Posterior vena cava (tissue), 2 donors: ENCODE measurements at regions of chr12 and their contacts with region 1.

Region 1: DNA sequence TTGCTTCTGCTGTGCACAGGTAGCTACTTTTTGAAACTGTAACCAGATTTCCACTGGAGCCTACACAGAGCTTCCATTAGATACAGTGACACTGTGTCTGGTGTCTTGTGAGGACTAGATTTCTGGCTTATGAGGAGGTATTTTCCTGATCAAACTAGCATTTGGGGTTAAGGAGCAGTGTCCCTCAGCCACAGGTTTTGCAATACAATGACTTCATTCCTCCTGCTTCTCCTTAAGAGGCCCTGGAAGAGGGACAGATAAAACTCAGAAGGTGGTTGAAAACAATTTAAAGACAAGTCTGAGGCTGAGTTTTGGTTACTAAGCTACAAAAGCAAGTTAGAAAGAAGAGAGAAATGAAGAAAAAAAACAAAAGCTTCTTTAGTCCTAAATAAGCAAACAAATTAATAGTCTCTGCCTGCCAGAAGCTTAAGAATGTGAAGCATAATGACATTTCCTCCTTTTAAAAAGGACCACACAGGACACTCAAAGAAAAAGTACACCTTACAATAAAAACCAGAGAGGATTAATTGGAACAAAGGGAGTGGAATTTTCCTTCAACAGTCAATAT is 53.0 kb downstream of the PKP2 start:
- DNase-seq: no peak

Region 2: GRCh38 chr12:32785557-32785956 is 58.1 kb before region 1 on chr12:
- intact Hi-C with region 1: loop called in 1 of 2 experiments (anchors 2 kb)
- DNase-seq: no peak